ENCODE measurements at regions of chr17 and their contacts with region 1.

Region 1: DNA sequence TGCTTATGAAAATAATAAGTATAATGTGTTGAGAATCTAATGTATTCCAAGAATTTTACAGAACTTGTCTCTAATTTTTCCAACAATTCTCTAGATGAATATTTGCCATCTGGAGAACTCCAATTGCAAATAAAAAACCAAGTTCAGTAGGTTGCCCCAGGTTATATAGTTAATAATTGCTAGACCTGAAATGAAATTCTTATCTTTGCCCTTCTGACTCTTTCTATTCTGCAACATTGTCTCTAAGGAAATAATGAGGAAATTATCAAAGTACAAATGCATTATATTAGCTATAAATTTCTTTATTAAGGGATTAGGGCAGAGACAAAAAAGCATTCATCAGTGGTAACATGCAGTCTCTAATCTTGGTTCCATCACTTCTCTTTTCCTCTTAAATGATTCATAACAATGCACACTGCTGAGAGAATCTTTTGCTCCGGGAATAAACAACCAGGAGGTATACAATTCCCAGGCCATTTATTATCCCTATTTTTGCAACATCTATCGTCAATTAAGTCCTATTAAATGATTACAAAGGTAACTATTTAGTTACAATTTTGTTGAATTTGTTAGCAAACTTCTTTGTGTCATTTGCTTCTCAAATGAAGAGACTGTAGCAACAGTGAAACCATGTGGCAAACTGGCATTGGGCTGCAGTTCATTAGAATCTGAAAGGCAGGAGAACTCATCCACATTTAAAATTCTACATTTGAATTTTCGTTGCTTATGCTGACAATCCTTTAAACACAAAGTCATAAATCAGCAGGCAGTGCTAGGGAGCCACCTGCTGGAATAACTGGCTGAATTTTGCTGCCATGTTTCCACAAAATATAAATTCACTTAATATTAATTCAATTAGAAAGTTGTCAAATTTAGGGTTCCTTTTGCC is 349.6 kb downstream of the KIF2B start:
- DNase-seq: peak; percentile 18
- ATAC-seq: no peak
- H3K4me3 ChIP-seq: no peak overlapping the region
- H3K27ac ChIP-seq: no peak overlapping the region
- H3K4me1 ChIP-seq: 0 out of 2 replicates have a peak, but pooled peaks cover 9% of the 10 kb centered on the region
- H3K27me3 ChIP-seq: no peaks in the 10 kb centered on the region
- CTCF ChIP-seq: peak; percentile 58
- EP300 ChIP-seq: no peak
- POLR2A ChIP-seq: no peak
- RAD21 ChIP-seq: 0 out of 2 replicates have a peak, but pooled peaks have one; percentile 32

Region 2: GRCh38 chr17:52170963-52171572 is 2001.3 kb before region 1 on chr17:
- CTCF ChIA-PET with region 1: no interaction called
- POLR2A ChIA-PET with region 1: no interaction called
- in situ Hi-C with region 1: no loop called
- intact Hi-C with region 1: loop called (anchors 5 kb)
- DNase-seq: peak; percentile 13
- ATAC-seq: peak; percentile 81
- H3K4me3 ChIP-seq: no peak overlapping the region
- H3K27ac ChIP-seq: no peak overlapping the region
- H3K4me1 ChIP-seq: no peaks in the 10 kb centered on the region
- H3K27me3 ChIP-seq: no peaks in the 10 kb centered on the region
- CTCF ChIP-seq: peak; percentile 66
- EP300 ChIP-seq: no peak
- POLR2A ChIP-seq: no peak
- RAD21 ChIP-seq: no peak

Region 3: DNA sequence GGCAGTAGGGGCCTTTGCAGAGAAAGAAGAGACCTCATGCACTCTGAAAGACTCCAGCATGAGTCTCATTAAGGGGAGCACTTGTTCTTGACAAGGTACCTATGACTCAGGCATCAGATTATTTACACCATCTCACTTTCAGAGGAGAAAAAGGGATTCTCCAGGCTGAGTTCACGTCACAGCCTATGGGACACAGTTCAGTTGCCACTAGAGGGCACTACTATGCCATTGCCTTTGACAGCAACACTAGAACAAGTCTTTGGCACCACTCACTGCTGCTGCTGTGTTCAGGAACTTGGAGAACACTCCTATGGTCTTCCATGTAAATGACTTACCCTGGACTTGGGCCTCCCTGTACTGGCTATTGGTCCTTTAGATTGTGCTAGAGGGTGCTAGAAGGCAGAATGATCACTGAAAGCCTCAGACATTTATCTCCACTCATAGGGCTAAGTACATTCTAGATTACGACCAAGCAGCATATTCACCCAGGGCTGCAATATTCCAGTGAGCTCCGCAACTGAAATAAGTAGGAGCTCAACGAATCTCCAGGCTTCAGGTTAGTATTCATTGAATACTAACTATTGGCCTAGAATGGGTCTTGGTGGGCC is 1788.7 kb before region 1 on chr17:
- CTCF ChIA-PET with region 1: interaction called, 5 read pairs
- POLR2A ChIA-PET with region 1: no interaction called
- in situ Hi-C with region 1: no loop called
- intact Hi-C with region 1: loop called (anchors 2 kb)
- DNase-seq: peak; percentile 71
- ATAC-seq: peak; percentile 98
- H3K4me3 ChIP-seq: no peak overlapping the region
- H3K27ac ChIP-seq: no peak overlapping the region
- H3K4me1 ChIP-seq: peaks cover 16% of the 10 kb centered on the region
- H3K27me3 ChIP-seq: no peaks in the 10 kb centered on the region
- CTCF ChIP-seq: peak; percentile 84
- EP300 ChIP-seq: no peak
- POLR2A ChIP-seq: no peak
- RAD21 ChIP-seq: peak; percentile 50

Region 4: GRCh38 chr17:53032861-53033271 is 1139.5 kb before region 1 on chr17:
- CTCF ChIA-PET with region 1: interaction called, 14 read pairs
- POLR2A ChIA-PET with region 1: no interaction called
- in situ Hi-C with region 1: loop called (anchors 10 kb)
- intact Hi-C with region 1: no loop called
- DNase-seq: peak; percentile 71
- ATAC-seq: peak; percentile 90
- H3K4me3 ChIP-seq: no peak overlapping the region
- H3K27ac ChIP-seq: no peak overlapping the region
- H3K4me1 ChIP-seq: peaks cover 8% of the 10 kb centered on the region
- H3K27me3 ChIP-seq: no peaks in the 10 kb centered on the region
- CTCF ChIP-seq: peak; percentile 74
- EP300 ChIP-seq: no peak
- POLR2A ChIP-seq: no peak
- RAD21 ChIP-seq: peak; percentile 42; the same call in 1 of the 2 replicates

Region 5: GRCh38 chr17:53516636-53517035 is 655.7 kb before region 1 on chr17:
- CTCF ChIA-PET with region 1: no interaction called
- POLR2A ChIA-PET with region 1: no interaction called
- in situ Hi-C with region 1: no loop called
- intact Hi-C with region 1: loop called (anchors 2 kb)
- DNase-seq: no peak
- ATAC-seq: no peak
- H3K4me3 ChIP-seq: no peak overlapping the region
- H3K27ac ChIP-seq: no peak overlapping the region
- H3K4me1 ChIP-seq: no peaks in the 10 kb centered on the region
- H3K27me3 ChIP-seq: no peaks in the 10 kb centered on the region
- CTCF ChIP-seq: no peak
- EP300 ChIP-seq: no peak
- POLR2A ChIP-seq: no peak
- RAD21 ChIP-seq: no peak

Region 6: GRCh38 chr17:54891176-54891821 is 719.0 kb after region 1 on chr17:
- CTCF ChIA-PET with region 1: no interaction called
- POLR2A ChIA-PET with region 1: no interaction called
- in situ Hi-C with region 1: no loop called
- intact Hi-C with region 1: loop called (anchors 1 kb)
- DNase-seq: peak; percentile 61
- ATAC-seq: peak; percentile 94
- H3K4me3 ChIP-seq: no peak overlapping the region
- H3K27ac ChIP-seq: no peak overlapping the region
- H3K4me1 ChIP-seq: no peaks in the 10 kb centered on the region
- H3K27me3 ChIP-seq: no peaks in the 10 kb centered on the region
- CTCF ChIP-seq: peak; percentile 75
- EP300 ChIP-seq: no peak
- POLR2A ChIP-seq: no peak
- RAD21 ChIP-seq: peak; percentile 63